ENCODE measurements at regions of chr10 and their contacts with region 1.

Region 1: DNA sequence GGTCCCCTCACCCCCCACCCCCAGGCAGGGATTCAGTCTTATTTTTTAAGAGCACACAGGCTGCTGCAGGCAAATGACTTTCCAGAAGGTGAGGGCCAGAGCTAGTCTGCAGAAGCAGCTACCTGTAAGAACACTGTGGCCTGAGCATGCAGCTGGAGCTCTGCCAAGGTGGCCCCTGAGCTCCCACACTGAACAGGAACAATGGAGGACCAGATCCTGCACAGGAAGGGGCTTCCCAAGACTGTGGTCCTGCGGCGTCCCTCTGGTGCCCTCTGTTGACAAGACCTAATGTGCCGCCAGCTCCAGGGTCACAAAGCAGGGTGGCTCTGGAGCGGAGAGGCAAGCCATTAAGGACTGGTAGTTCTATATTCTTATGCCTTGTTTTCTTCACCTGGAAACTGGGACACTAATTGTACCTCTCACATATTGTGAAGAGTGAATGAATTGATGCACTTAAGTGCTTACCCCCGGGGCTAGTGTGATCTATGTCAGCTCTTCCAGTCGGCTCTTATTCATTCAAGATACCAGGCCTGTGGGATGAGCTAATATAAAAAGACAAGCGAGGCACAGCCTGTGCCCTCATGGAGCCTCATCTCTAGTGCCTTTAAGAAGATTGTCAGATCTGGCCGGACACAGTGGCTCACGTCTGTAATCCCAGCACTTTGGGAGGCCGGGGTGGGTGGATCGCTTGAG is 8.0 kb upstream of the BEND7 start:
- DNase-seq: peak; percentile 83
- ATAC-seq: peak; percentile 100
- H3K4me3 Mint-ChIP-seq: peak overlapping the region; percentile 16; the same call in 1 of the 2 replicates
- H3K27ac Mint-ChIP-seq: no peak overlapping the region
- H3K4me1 Mint-ChIP-seq: peaks cover 12% of the 10 kb centered on the region
- H3K27me3 Mint-ChIP-seq: peaks cover 4% of the 10 kb centered on the region
- CTCF ChIP-seq: peak; percentile 53

Region 2: DNA sequence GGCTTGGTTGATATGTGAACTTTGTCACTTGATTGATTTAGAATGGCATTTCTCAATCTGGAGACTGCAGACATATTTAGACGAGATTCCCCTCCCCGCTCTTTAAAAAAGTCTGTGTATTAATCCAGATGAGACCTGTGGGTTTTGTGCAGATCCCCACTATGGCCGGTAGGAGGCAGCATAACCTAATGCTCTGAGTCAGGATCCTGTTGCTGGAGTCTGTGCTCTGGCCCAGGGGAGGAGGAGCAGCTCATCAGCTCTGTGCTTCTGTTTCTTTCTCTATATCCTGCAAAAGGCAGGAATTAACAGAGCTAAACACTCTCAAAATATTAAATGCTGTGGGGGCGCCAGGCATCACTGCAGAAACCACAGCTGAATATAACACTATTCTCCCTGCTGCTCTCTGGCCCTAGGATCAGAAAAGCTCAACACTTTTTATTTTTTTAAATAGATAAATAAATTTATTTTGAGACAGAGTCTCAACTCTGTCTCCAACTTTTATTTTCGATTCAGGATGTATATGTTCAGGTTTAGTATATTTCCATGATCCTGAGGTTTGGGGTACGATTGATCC is 164.8 kb before region 1 on chr10:
- CTCF ChIA-PET with region 1: interaction called, 88 read pairs
- POLR2A ChIA-PET with region 1: no interaction called
- DNase-seq: peak; percentile 65
- ATAC-seq: peak; percentile 100
- H3K4me3 Mint-ChIP-seq: no peak overlapping the region
- H3K27ac Mint-ChIP-seq: no peak overlapping the region
- H3K4me1 Mint-ChIP-seq: peaks cover 10% of the 10 kb centered on the region; the same call in 1 of the 2 replicates
- H3K27me3 Mint-ChIP-seq: no peaks in the 10 kb centered on the region
- CTCF ChIP-seq: no peak; the same call in 1 of the 2 replicates

Region 3: DNA sequence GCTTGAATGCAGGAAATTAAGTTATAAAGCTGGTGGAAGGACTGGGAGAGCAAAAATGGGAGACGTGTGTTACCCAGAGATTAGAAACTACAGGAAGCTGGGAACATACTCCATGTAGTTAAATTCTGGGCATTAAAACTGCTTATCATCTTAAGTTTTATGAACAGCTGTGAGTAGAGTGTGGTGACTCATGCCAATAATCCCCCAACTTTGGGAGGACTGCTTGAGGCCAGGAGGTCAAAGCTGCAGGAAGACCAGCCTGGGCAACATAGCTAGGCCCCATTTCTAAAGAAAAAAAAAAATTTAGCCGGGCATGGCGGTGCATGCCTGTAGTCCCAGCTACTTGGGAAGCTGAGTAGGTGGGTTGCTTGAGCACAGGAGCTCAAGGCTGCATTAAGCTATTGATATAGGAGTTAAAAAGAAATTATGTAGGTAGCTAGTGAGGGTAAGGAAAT is 132.5 kb before region 1 on chr10:
- CTCF ChIA-PET with region 1: interaction called, 13 read pairs
- POLR2A ChIA-PET with region 1: no interaction called
- DNase-seq: no peak
- ATAC-seq: no peak
- H3K4me3 Mint-ChIP-seq: no peak overlapping the region
- H3K27ac Mint-ChIP-seq: peak overlapping the region; percentile 90
- H3K4me1 Mint-ChIP-seq: peaks cover 35% of the 10 kb centered on the region
- H3K27me3 Mint-ChIP-seq: peaks cover 14% of the 10 kb centered on the region
- CTCF ChIP-seq: no peak

Region 4: GRCh38 chr10:13440185-13441061 is 96.4 kb before region 1 on chr10:
- CTCF ChIA-PET with region 1: interaction called, 36 read pairs
- POLR2A ChIA-PET with region 1: no interaction called
- DNase-seq: peak; percentile 79
- ATAC-seq: peak; percentile 83
- H3K4me3 Mint-ChIP-seq: peak overlapping the region; percentile 70
- H3K27ac Mint-ChIP-seq: no peak overlapping the region
- H3K4me1 Mint-ChIP-seq: peaks cover 41% of the 10 kb centered on the region
- H3K27me3 Mint-ChIP-seq: peaks cover 32% of the 10 kb centered on the region
- CTCF ChIP-seq: peak; percentile 86

Region 5: GRCh38 chr10:13518076-13518692 is 18.6 kb before region 1 on chr10:
- CTCF ChIA-PET with region 1: interaction called, 26 read pairs
- POLR2A ChIA-PET with region 1: no interaction called
- DNase-seq: peak; percentile 70
- ATAC-seq: peak; percentile 90
- H3K4me3 Mint-ChIP-seq: no peak overlapping the region
- H3K27ac Mint-ChIP-seq: no peak overlapping the region; the same call in 1 of the 2 replicates
- H3K4me1 Mint-ChIP-seq: peaks cover 13% of the 10 kb centered on the region
- H3K27me3 Mint-ChIP-seq: no peaks in the 10 kb centered on the region
- CTCF ChIP-seq: no peak

Region 6: DNA sequence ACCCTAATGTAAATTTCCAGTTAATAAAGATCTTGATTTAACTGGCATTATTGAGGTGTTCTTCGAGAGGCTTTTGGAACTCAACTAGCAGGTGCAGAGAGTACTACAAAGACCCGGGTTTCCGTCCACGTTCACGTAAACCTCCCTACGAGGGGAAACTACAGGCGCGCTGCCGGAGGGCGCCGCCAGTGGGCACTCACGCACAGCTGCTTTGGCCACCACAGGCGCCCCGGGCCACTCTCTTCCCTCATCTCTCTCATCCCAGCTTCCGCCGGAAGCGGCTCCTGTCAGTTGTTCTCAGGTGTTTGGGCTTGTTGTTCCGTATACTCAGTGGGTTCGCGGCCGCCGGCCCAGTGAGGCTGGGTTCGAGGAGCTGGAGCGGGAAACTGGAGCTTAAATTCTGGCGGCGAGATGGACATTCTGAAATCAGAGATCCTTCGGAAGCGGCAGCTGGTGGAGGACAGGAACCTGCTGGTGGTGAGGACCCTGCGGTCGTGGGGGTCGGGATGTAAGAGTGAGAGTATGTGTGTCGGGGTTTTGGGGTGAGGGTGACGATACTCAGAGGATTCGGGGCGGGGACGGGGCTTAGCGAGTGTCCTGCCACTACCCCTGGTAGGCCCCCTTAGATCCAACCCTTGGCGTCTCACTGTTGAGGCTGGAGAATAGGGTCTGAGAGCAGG is 50.0 kb after region 1 on chr10 and contains the start of gene PRPF18:
- CTCF ChIA-PET with region 1: interaction called, 14 read pairs
- POLR2A ChIA-PET with region 1: no interaction called
- DNase-seq: peak; percentile 94
- ATAC-seq: peak; percentile 97
- H3K4me3 Mint-ChIP-seq: peak within 1 kb of the TSS; percentile 100
- H3K27ac Mint-ChIP-seq: no peak within 1 kb of the TSS; the same call in 1 of the 2 replicates
- H3K4me1 Mint-ChIP-seq: peaks cover 14% of the 10 kb centered on the region
- H3K27me3 Mint-ChIP-seq: peaks cover 11% of the 10 kb centered on the region
- CTCF ChIP-seq: peak; percentile 71
- total RNA-seq, gene PRPF18: 11.5 to 13.4 TPM (median 11.8 TPM) in 3 replicates

Region 7: GRCh38 chr10:13613519-13613918 is 76.7 kb after region 1 on chr10:
- CTCF ChIA-PET with region 1: no interaction called
- POLR2A ChIA-PET with region 1: no interaction called
- DNase-seq: no peak
- ATAC-seq: no peak
- H3K4me3 Mint-ChIP-seq: no peak overlapping the region
- H3K27ac Mint-ChIP-seq: no peak overlapping the region
- H3K4me1 Mint-ChIP-seq: peaks cover 34% of the 10 kb centered on the region
- H3K27me3 Mint-ChIP-seq: no peaks in the 10 kb centered on the region
- CTCF ChIP-seq: no peak

Region 8: DNA sequence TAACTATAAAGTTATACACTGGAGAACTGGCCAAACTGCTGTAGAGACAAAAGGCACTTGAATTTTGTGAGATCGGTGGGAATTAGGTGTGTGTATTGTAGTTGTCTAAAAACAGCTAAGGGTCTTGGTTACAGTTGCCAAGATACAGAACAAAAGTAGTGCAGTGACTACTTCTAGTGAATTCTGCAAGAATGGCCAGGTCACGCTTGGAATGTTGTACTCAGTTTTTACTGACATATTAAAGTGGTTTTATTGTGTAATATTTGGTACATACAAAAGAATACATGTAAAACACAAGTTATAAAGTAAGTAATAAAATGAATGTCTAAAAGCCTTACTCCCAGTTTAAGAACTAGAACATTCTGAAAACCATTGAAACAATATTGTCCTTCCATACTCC is 92.3 kb after region 1 on chr10:
- CTCF ChIA-PET with region 1: no interaction called
- POLR2A ChIA-PET with region 1: no interaction called
- DNase-seq: no peak
- ATAC-seq: no peak
- H3K4me3 Mint-ChIP-seq: no peak overlapping the region
- H3K27ac Mint-ChIP-seq: peak overlapping the region; percentile 61
- H3K4me1 Mint-ChIP-seq: peaks cover 6% of the 10 kb centered on the region
- H3K27me3 Mint-ChIP-seq: no peaks in the 10 kb centered on the region
- CTCF ChIP-seq: no peak